OCI-LY7 (cell line): ENCODE measurements at regions of chr6 and their contacts with region 1.

Region 1: GRCh38 chr6:96542702-96543101 is 20.2 kb upstream of the FHL5 start:
- DNase-seq: peak; percentile 42
- H3K4me3 ChIP-seq: no peak overlapping the region
- H3K27ac ChIP-seq: no peak overlapping the region
- H3K4me1 ChIP-seq: no peaks in the 10 kb centered on the region
- CTCF ChIP-seq: peak; percentile 86

Region 2: GRCh38 chr6:96521644-96522464 is 20.8 kb before region 1 on chr6 and contains the start of gene UFL1:
- CTCF ChIA-PET with region 1: no interaction called
- POLR2A ChIA-PET with region 1: interaction called, 13 read pairs
- intact Hi-C with region 1: no loop called
- DNase-seq: peak; percentile 95
- H3K4me3 ChIP-seq: peak within 1 kb of the TSS; percentile 90
- H3K27ac ChIP-seq: peak within 1 kb of the TSS; percentile 84
- H3K4me1 ChIP-seq: peaks cover 24% of the 10 kb centered on the region
- CTCF ChIP-seq: no peak
- total RNA-seq, gene UFL1: 14.1 and 15.5 TPM in 2 replicates

Region 3: GRCh38 chr6:96554559-96554958 is 11.9 kb after region 1 on chr6:
- CTCF ChIA-PET with region 1: no interaction called
- POLR2A ChIA-PET with region 1: interaction called, 16 read pairs
- intact Hi-C with region 1: no loop called
- DNase-seq: no peak
- H3K4me3 ChIP-seq: no peak overlapping the region
- H3K27ac ChIP-seq: no peak overlapping the region
- H3K4me1 ChIP-seq: no peaks in the 10 kb centered on the region
- CTCF ChIP-seq: no peak

Region 4: DNA sequence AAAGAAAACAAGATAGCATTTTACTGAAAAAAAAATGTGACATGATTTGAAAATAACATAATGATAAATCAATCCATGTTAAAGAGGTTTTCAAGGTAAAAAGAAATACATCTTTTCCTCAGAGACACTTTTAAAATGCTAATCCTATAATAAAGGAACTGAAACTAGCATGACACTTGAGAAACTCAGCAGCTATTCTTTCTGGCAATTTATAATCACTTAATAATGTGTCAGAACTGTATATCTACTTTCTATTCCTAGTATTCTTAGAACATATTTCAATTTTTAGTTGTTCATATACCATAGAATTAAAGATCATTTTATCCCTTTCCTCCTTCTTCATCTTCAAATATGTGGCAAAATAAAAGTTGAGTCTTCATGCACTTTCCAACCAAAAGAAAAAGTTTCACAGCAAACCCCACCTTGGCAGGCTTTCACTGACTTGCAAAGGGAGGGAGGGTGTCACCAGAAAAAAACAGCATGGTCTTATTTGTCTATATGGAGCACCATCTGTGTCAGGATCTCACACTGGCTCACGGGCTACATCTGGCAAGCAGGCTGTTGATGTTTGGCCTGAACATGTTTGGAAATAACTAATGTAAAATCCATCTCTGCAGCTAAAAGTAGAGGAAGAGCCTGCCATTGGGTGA is 68.8 kb after region 1 on chr6:
- CTCF ChIA-PET with region 1: no interaction called
- POLR2A ChIA-PET with region 1: interaction called, 11 read pairs
- intact Hi-C with region 1: loop called (anchors 2 kb)
- DNase-seq: peak; percentile 66
- H3K4me3 ChIP-seq: peak overlapping the region; percentile 14
- H3K27ac ChIP-seq: peak overlapping the region; percentile 76
- H3K4me1 ChIP-seq: peaks cover 63% of the 10 kb centered on the region
- CTCF ChIP-seq: no peak

Region 5: GRCh38 chr6:96687121-96687520 is 144.4 kb after region 1 on chr6:
- CTCF ChIA-PET with region 1: no interaction called
- POLR2A ChIA-PET with region 1: no interaction called
- intact Hi-C with region 1: loop called (anchors 5 kb)
- DNase-seq: no peak
- H3K4me3 ChIP-seq: no peak overlapping the region
- H3K27ac ChIP-seq: no peak overlapping the region
- H3K4me1 ChIP-seq: no peaks in the 10 kb centered on the region
- CTCF ChIP-seq: no peak

Region 6: DNA sequence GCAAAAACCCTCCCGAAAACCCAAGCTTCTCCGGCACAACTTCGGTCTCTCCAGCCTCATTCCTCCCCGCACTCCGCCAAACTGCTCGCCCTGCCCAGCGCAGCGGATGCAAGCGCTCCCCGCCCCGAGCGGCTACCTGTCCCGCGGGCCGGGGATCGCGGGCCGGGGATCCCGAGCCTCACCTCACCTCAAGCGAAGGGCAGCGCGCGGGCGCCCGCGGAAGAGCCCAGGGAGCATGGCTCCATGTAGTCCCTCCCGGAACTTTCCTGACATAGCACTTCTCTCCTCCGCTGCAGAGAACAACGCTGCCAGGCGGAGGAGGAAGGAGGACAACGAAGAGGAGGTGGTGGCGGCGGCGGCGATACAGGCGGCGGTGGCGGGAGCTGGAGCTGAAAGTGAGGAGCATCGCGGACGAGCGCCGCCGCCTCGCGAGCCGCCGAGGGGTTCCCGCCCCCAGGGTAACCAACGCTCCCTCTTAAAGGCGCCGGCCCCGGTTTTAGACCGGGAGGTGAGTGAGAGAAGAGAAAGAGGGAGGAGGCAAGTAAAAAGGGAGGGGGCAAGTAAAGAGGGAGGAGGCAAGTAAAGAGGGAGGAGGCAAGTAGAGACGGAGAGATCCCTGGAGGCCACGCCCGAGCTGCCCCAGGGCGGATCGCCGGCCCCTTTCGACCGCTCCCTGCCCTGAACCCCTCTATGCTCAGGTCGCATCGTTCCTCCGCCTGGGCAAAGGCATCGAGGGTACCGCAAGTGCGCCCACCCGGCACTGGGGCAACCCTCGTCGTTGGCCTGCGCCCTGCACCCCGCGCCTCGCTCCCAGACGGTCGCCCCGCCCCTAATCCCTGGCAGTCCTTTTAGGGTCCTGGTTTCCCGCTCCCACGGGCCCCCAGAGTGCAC is 294.6 kb after region 1 on chr6 and contains the start of gene GPR63:
- CTCF ChIA-PET with region 1: interaction called, 7 read pairs
- POLR2A ChIA-PET with region 1: no interaction called
- intact Hi-C with region 1: loop called (anchors 5 kb)
- DNase-seq: peak; percentile 64
- H3K4me3 ChIP-seq: peak within 1 kb of the TSS; percentile 72
- H3K27ac ChIP-seq: no peak within 1 kb of the TSS
- H3K4me1 ChIP-seq: peaks cover 6% of the 10 kb centered on the region
- CTCF ChIP-seq: no peak
- total RNA-seq, gene GPR63: 0.57 and 1.0 TPM in 2 replicates

Region 7: DNA sequence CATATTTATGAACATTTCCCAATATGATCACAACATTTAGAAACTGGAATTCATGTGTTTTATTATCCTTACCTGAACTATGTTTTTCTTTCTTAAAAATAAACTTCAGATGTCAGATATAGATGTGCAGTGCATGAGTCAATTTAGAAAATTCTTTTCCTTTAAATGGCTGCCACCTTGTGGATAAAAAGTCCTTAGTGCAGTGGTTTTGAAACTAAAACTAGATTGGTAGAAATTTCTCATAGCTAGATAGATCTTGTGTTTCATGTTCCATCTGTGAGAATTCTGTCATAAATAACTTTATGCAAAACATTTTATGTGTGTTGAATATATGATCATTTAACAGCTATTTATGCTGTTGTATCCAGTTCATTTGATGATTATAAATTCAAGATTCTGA is 516.8 kb after region 1 on chr6:
- CTCF ChIA-PET with region 1: no interaction called
- POLR2A ChIA-PET with region 1: interaction called, 3 read pairs
- intact Hi-C with region 1: loop called (anchors 1 kb)
- DNase-seq: peak; percentile 62
- H3K4me3 ChIP-seq: no peak overlapping the region
- H3K27ac ChIP-seq: no peak overlapping the region
- H3K4me1 ChIP-seq: no peaks in the 10 kb centered on the region
- CTCF ChIP-seq: peak; percentile 91